ENCODE measurements at regions of chr10 and their contacts with region 1.

Region 1: DNA sequence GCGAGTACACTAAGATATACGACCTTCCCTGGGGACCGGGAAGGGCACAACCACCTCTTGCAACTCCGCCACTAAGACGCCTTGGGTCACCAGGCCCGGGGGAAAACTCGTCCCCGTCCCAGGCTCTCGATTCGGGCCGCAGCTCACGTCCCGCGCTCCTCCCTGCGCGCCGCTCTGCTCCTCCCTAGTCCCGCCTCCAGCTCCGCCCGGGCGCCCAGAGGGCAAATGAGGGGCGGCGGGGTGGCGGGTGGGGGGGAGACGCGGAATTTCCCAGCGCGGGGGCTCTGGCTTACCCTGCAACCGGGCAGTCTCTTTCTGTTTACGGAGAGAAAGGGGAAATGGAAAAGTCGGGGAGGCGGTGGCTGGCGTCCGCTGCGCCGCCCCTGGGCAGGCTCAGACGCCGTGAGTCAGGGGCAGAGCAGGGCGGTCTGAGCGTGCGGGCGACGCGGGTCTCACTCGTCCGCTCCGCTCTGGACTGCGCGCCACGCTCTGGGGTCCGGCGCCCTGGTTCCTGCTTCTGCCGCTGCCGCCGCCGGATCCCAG is at the start of gene MAP3K8:
- DNase-seq: peak; percentile 89
- ATAC-seq: peak; percentile 89
- H3K4me3 ChIP-seq: peak within 1 kb of the TSS; percentile 93 to 97 (median 96)
- H3K27ac ChIP-seq: peak within 1 kb of the TSS; percentile 97
- H3K4me1 ChIP-seq: peaks cover 50% of the 10 kb centered on the region
- H3K27me3 ChIP-seq: no peaks in the 10 kb centered on the region; a peak in 1 of 5 replicates
- CTCF ChIP-seq: peak; percentile 22; the same call in 1 of the 2 replicates
- EP300 ChIP-seq: peak in 1 of 2 experiments; percentile 42; a peak in 2 of 4 replicates
- POLR2A ChIP-seq: peak; percentile 77 to 78
- RAD21 ChIP-seq: peak; percentile 52; the same call in 1 of the 2 replicates
- total RNA-seq, gene MAP3K8: 19.3 and 21.8 TPM in 2 replicates

Region 2: DNA sequence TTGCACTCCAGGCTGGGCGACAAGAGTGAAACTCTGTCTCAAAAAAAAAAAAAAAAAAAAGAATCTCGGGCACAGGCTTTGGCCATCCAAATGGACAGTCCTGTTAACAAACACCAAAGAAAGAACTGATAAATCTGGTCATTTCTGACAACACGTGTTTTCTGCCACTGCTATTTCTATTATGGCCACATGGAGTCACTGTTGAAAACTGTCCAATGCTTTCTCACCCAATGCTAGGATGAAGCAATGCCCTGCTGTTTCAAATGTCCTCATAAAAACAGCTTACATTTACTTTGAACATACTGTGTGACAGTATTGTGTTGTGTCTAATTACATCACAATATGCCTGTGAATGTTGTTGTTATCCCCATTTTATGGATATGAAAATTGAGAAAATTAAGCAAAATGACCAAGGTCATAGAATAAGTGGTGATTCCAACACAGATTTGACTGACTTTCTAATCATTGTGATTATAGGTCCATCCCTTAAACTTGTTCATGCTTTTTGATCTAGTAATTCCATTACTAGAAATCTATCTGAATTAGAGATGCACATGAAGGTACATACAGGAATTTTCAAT is 19.7 kb before region 1 on chr10:
- CTCF ChIA-PET with region 1: no interaction called
- POLR2A ChIA-PET with region 1: interaction called, 9 read pairs
- in situ Hi-C with region 1: no loop called
- intact Hi-C with region 1: loop called (anchors 2 kb)
- DNase-seq: peak; percentile 70
- ATAC-seq: peak; percentile 80
- H3K4me3 ChIP-seq: no peak overlapping the region
- H3K27ac ChIP-seq: no peak overlapping the region
- H3K4me1 ChIP-seq: peaks cover 29% of the 10 kb centered on the region
- H3K27me3 ChIP-seq: no peaks in the 10 kb centered on the region
- CTCF ChIP-seq: peak; percentile 85
- EP300 ChIP-seq: no peak
- POLR2A ChIP-seq: no peak
- RAD21 ChIP-seq: peak; percentile 78

Region 3: DNA sequence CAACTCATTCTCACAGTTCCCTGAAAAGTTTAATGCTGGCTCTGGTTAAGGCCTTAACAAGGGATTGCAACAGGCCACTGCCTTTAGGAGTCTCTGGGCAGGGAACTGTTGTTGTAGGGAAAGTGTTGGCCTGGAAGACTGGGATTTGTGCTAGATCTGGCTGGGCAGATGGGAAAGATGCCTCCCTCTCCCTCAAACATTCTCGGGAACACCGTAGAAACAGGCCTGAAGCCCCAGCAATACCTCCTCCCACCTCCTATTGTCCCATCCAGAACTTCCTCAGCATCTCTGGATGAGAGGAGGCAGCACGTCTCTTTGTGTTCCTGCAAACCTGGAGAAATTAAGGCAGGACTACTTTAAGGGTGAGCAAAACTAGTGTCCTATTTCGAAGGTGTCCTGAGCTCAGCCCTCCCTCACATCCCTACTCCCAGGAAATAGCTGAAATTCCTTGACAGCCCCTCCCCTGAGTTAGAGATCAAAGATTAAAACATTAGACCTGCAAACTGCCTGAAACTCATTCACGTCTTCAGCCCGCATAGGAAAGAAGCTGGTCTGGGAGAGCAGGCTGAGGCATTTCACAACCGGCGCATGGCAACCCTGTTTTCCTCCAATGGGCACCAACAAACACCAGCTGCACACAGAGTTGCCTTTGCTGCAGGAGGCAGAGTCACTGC is 10.7 kb before region 1 on chr10:
- CTCF ChIA-PET with region 1: interaction called, 3 read pairs
- POLR2A ChIA-PET with region 1: interaction called, 53 read pairs
- in situ Hi-C with region 1: no loop called
- intact Hi-C with region 1: no loop called
- DNase-seq: peak; percentile 89
- ATAC-seq: peak; percentile 94
- H3K4me3 ChIP-seq: peak overlapping the region; percentile 28 to 62 (median 36); a peak in 5 of 6 replicates
- H3K27ac ChIP-seq: peak overlapping the region; percentile 72
- H3K4me1 ChIP-seq: peaks cover 71% of the 10 kb centered on the region
- H3K27me3 ChIP-seq: no peaks in the 10 kb centered on the region
- CTCF ChIP-seq: no peak
- EP300 ChIP-seq: peak; percentile 50 to 77
- POLR2A ChIP-seq: peak; percentile 16 to 36; a peak in 1 of 4 replicates
- RAD21 ChIP-seq: no peak

Region 4: GRCh38 chr10:30534465-30535144 is 100.8 kb after region 1 on chr10:
- CTCF ChIA-PET with region 1: no interaction called
- POLR2A ChIA-PET with region 1: interaction called, 5 read pairs
- in situ Hi-C with region 1: no loop called
- intact Hi-C with region 1: loop called (anchors 1 kb)
- DNase-seq: peak; percentile 67
- ATAC-seq: peak; percentile 68
- H3K4me3 ChIP-seq: peak overlapping the region in 1 of 3 experiments; percentile 49; a peak in 1 of 6 replicates
- H3K27ac ChIP-seq: no peak overlapping the region
- H3K4me1 ChIP-seq: peaks cover 78% of the 10 kb centered on the region
- H3K27me3 ChIP-seq: no peaks in the 10 kb centered on the region; a peak in 1 of 5 replicates
- CTCF ChIP-seq: peak; percentile 89
- EP300 ChIP-seq: no peak
- POLR2A ChIP-seq: no peak
- RAD21 ChIP-seq: peak; percentile 77

Region 5: GRCh38 chr10:30606313-30606712 is 172.5 kb after region 1 on chr10:
- CTCF ChIA-PET with region 1: no interaction called
- POLR2A ChIA-PET with region 1: interaction called, 30 read pairs
- in situ Hi-C with region 1: no loop called
- intact Hi-C with region 1: no loop called
- DNase-seq: peak; percentile 48
- ATAC-seq: peak; percentile 10; the same call in 2 of the 3 replicates
- H3K4me3 ChIP-seq: peak overlapping the region in 1 of 3 experiments; percentile 26; a peak in 1 of 6 replicates
- H3K27ac ChIP-seq: peak overlapping the region; percentile 97
- H3K4me1 ChIP-seq: peaks cover 96% of the 10 kb centered on the region
- H3K27me3 ChIP-seq: no peaks in the 10 kb centered on the region
- CTCF ChIP-seq: no peak
- EP300 ChIP-seq: no peak
- POLR2A ChIP-seq: no peak
- RAD21 ChIP-seq: no peak

Measured in HepG2 (cell line).